Mammary epithelial cell (primary cell): ENCODE measurements at regions of chr17 and their contacts with region 1.

Region 1: GRCh38 chr17:18033442-18034099 is 5.4 kb downstream of the ATPAF2 start:
- DNase-seq: peak; percentile 74
- H3K4me3 ChIP-seq: no peak overlapping the region
- H3K27ac ChIP-seq: no peak overlapping the region
- H3K4me1 ChIP-seq: peaks cover 25% of the 10 kb centered on the region
- H3K27me3 ChIP-seq: no peaks in the 10 kb centered on the region
- CTCF ChIP-seq: peak; percentile 55 to 60

Region 2: DNA sequence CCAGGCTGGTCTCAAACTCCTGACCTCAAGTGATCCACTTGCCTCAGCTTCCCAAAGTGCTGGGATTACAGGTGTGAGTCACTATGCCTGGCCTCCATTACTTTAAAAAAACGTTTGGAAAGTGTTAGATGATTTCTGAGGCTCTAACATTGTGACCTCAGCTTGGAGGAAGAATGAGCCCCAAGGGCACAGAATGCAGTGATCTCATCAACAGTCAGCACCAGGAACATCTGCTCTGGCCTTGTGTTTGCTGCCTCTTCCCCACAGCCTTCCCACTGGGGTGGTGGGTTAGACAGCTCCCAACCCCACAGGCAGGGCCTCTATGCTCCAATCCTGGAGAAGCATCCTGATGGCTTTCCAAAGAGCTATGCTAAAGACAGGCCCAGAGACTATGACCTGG is 159.1 kb before region 1 on chr17:
- CTCF ChIA-PET with region 1: no interaction called
- dilution Hi-C with region 1: no loop called
- in situ Hi-C with region 1: no loop called
- intact Hi-C with region 1: loop called (anchors 5 kb)
- DNase-seq: peak; percentile 88
- H3K4me3 ChIP-seq: no peak overlapping the region
- H3K27ac ChIP-seq: no peak overlapping the region
- H3K4me1 ChIP-seq: no peaks in the 10 kb centered on the region
- H3K27me3 ChIP-seq: no peaks in the 10 kb centered on the region
- CTCF ChIP-seq: no peak

Region 3: DNA sequence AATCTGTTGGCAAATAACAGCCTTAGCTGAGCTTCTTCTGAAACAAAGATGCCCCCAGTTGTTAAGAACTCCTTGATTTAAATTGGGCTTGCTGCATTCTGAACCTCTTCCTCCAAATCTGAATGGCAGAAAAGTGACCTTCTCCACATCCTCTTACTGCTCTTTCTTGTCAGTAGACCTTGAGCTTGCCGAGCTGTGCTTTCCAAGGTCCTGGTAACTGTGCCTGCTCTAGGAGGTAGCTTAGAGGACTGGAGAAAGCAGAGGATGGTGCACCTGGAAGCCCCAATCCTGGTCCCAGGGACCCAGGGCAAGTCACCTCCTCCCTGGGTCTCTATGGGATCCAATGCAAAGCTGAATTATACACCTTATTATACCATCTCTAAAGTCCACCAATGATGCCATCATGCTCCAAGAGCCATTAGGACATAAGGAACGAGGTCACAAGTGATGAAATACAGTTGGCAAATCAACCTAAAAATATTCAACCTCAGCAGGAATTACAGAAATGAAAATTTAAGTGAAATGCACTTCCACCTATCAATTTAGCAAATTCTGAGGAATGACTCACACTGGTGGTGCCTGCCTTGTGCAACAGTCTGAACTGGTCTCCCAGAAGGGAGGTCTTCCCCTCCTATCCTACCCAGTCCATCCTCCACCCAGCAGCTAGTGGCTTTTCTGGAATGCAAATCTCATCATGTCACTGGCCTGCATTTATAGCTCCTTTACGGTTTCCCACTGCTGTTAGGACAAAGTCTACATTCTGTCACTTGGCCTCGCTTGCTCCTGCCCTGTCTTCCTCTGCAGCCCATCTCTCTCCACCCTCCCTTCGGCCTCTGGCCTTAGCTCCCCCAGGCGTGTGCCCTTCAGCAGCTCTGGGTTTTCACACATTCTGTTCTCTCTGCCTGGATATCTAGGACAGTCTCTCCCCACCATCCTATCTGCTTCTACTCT is 98.0 kb before region 1 on chr17:
- CTCF ChIA-PET with region 1: no interaction called
- dilution Hi-C with region 1: loop called (anchors 5 kb)
- in situ Hi-C with region 1: no loop called
- intact Hi-C with region 1: no loop called
- DNase-seq: peak; percentile 68
- H3K4me3 ChIP-seq: no peak overlapping the region
- H3K27ac ChIP-seq: peak overlapping the region; percentile 56
- H3K4me1 ChIP-seq: peaks cover 58% of the 10 kb centered on the region
- H3K27me3 ChIP-seq: no peaks in the 10 kb centered on the region
- CTCF ChIP-seq: no peak

Region 4: GRCh38 chr17:17985555-17985954 is 48.0 kb before region 1 on chr17:
- CTCF ChIA-PET with region 1: no interaction called
- dilution Hi-C with region 1: loop called (anchors 5 kb)
- in situ Hi-C with region 1: no loop called
- intact Hi-C with region 1: loop called (anchors 1 kb)
- DNase-seq: no peak
- H3K4me3 ChIP-seq: no peak overlapping the region
- H3K27ac ChIP-seq: no peak overlapping the region
- H3K4me1 ChIP-seq: peaks cover 16% of the 10 kb centered on the region
- H3K27me3 ChIP-seq: no peaks in the 10 kb centered on the region
- CTCF ChIP-seq: peak in 1 of 2 donors; percentile 39

Region 5: GRCh38 chr17:18087610-18088491 is 54.3 kb after region 1 on chr17 and contains the start of gene DRG2:
- CTCF ChIA-PET with region 1: no interaction called
- dilution Hi-C with region 1: no loop called
- in situ Hi-C with region 1: no loop called
- intact Hi-C with region 1: no loop called
- DNase-seq: peak; percentile 87
- H3K4me3 ChIP-seq: peak within 1 kb of the TSS; percentile 58 to 98 (median 72)
- H3K27ac ChIP-seq: peak within 1 kb of the TSS; percentile 64
- H3K4me1 ChIP-seq: peaks cover 7% of the 10 kb centered on the region
- H3K27me3 ChIP-seq: no peaks in the 10 kb centered on the region
- CTCF ChIP-seq: peak in 1 of 2 donors; percentile 14
- total RNA-seq, gene DRG2: 36.3 to 37.5 TPM